Activated naive CD4-positive, alpha-beta T cell treated with anti-CD3 and anti-CD28 coated beads for 36 hours (primary cell): ENCODE measurements at regions of chr1 and their contacts with region 1.

Region 1: GRCh38 chr1:243255791-243256512 is at the start of gene SDCCAG8:
- DNase-seq: peak; percentile 97
- H3K4me3 Mint-ChIP-seq: peak within 1 kb of the TSS; percentile 99
- H3K27ac Mint-ChIP-seq: peak within 1 kb of the TSS; percentile 100
- H3K4me1 Mint-ChIP-seq: peaks cover 36% of the 10 kb centered on the region
- H3K27me3 Mint-ChIP-seq: no peaks in the 10 kb centered on the region
- total RNA-seq, gene SDCCAG8: 24.5 to 29.9 TPM

Region 2: GRCh38 chr1:241519308-241520079 is 1736.5 kb before region 1 on chr1 and contains the start of gene FH:
- CTCF ChIA-PET with region 1: no interaction called
- intact Hi-C with region 1: loop called (anchors 5 kb)
- DNase-seq: peak; percentile 97
- H3K4me3 Mint-ChIP-seq: peak within 1 kb of the TSS; percentile 89
- H3K27ac Mint-ChIP-seq: peak within 1 kb of the TSS; percentile 77
- H3K4me1 Mint-ChIP-seq: peaks cover 11% of the 10 kb centered on the region
- H3K27me3 Mint-ChIP-seq: peaks cover 11% of the 10 kb centered on the region
- total RNA-seq, gene FH: 91.6 to 95.4 TPM

Region 3: DNA sequence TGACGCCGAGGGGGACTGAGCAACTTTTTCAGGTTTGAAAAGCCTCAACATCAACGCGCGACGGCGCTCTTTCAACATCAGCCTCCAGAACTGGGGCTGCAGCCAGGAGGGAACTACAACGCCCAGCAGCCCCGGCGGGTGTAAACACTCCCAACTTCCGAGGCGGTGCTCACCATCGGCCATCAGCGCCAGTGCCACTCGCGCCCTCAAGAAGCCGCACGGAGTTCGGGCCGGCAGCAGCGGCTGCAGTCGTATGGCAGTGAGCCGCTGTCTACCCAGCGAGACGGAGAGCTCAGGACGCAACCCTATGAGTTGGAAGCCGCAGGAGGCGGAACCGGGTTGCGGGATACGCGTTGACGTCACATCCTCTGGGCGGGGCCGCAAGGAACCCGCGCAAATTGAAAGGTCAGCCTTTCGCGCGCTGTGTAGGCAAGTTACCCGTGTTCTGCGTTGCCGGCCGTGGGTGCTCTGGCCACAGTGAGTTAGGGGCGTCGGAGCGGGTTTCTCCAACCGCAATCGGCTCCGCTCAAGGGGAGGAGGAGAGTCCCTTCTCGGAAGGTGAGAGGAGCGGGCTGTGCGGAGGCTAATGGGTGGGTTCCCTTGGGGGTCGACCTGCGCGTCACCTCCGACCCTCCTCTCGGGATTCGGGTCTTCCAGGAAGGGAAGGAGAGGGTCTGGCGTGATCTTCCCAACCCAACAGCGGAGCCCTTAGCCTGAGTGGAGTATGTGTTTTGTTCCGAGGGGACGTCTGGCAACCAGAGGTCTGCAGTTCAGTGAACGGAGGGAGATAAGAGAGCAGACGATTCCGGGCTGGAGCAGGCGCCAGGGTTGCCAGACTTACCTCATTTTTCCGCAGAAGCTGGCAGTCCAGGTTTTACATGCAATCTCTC is 1407.9 kb before region 1 on chr1 and contains the start of gene EXO1:
- CTCF ChIA-PET with region 1: no interaction called
- intact Hi-C with region 1: loop called (anchors 5 kb)
- DNase-seq: peak; percentile 93
- H3K4me3 Mint-ChIP-seq: peak within 1 kb of the TSS; percentile 98
- H3K27ac Mint-ChIP-seq: peak within 1 kb of the TSS; percentile 99
- H3K4me1 Mint-ChIP-seq: peaks cover 22% of the 10 kb centered on the region
- H3K27me3 Mint-ChIP-seq: peaks cover 1% of the 10 kb centered on the region
- total RNA-seq, gene EXO1: 55.3 to 59.6 TPM

Region 4: DNA sequence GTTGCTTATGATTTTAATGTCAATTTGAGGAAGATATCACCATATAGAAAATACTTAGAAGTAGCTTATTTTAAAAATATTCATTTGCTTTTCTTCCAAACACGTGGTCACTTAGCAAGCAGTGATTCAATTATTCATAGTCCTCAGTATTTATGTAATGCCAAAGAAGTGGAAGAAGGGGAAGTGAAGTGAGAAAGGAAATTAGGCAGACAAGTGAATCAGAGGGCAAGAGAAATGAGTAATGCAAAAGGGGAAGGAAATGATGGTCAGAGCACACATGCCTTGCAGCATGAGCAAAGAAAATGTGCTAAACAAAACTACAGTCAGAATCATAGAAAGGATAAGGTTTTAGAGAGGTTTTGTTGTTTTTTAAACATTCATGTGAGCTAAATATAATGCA is 31.7 kb after region 1 on chr1:
- CTCF ChIA-PET with region 1: interaction called, 5 read pairs
- intact Hi-C with region 1: loop called (anchors 1 kb)
- DNase-seq: peak; percentile 23
- H3K4me3 Mint-ChIP-seq: no peak overlapping the region
- H3K27ac Mint-ChIP-seq: peak overlapping the region; percentile 83
- H3K4me1 Mint-ChIP-seq: peaks cover 40% of the 10 kb centered on the region
- H3K27me3 Mint-ChIP-seq: no peaks in the 10 kb centered on the region

Region 5: GRCh38 chr1:243850452-243851256 is 594.7 kb after region 1 on chr1:
- CTCF ChIA-PET with region 1: no interaction called
- intact Hi-C with region 1: loop called (anchors 1 kb)
- DNase-seq: peak; percentile 86
- H3K4me3 Mint-ChIP-seq: peak overlapping the region; percentile 80
- H3K27ac Mint-ChIP-seq: peak overlapping the region; percentile 81
- H3K4me1 Mint-ChIP-seq: peaks cover 30% of the 10 kb centered on the region
- H3K27me3 Mint-ChIP-seq: peaks cover 7% of the 10 kb centered on the region

Region 6: GRCh38 chr1:244835276-244836134 is 1579.6 kb after region 1 on chr1 and contains the start of gene COX20:
- CTCF ChIA-PET with region 1: no interaction called
- intact Hi-C with region 1: loop called (anchors 10 kb)
- DNase-seq: peak; percentile 85
- H3K4me3 Mint-ChIP-seq: peak within 1 kb of the TSS; percentile 94
- H3K27ac Mint-ChIP-seq: peak within 1 kb of the TSS; percentile 99
- H3K4me1 Mint-ChIP-seq: peaks cover 38% of the 10 kb centered on the region
- H3K27me3 Mint-ChIP-seq: no peaks in the 10 kb centered on the region
- total RNA-seq, gene COX20: 21.4 to 24.2 TPM